IMR-90 (cell line): ENCODE measurements at regions of chr9 and their contacts with region 1.

Region 1: DNA sequence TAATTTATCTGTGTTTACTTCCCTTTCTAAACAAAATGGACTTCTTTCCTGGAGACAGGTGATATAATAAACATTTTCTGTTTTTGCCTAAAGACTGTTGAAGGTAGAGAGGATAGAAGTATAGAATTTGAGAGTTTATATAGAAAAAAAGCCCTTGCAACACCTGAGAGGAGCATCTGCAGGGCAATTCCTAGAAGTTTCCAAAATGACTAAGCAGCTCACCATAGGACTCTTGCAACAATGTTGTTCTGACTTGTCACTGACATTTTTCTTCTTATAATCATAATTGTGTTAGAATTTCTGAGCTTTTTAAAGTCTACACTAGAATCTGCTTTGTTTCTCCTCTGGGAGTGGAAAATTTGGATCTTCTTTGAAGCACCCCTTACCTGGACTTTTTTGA is 216.8 kb downstream of the TUSC1 start:
- DNase-seq: no peak
- ATAC-seq: no peak
- H3K4me3 ChIP-seq: no peak overlapping the region
- H3K27ac ChIP-seq: no peak overlapping the region
- H3K4me1 ChIP-seq: no peaks in the 10 kb centered on the region
- H3K27me3 ChIP-seq: no peaks in the 10 kb centered on the region
- CTCF ChIP-seq: no peak
- POLR2A ChIP-seq: no peak
- RAD21 ChIP-seq: no peak

Region 2: GRCh38 chr9:25412646-25413045 is 48.8 kb before region 1 on chr9:
- CTCF ChIA-PET with region 1: no interaction called
- POLR2A ChIA-PET with region 1: no interaction called
- dilution Hi-C with region 1: no loop called
- in situ Hi-C with region 1: no loop called
- intact Hi-C with region 1: loop called (anchors 10 kb)
- DNase-seq: no peak
- ATAC-seq: no peak
- H3K4me3 ChIP-seq: no peak overlapping the region
- H3K27ac ChIP-seq: no peak overlapping the region
- H3K4me1 ChIP-seq: no peaks in the 10 kb centered on the region
- H3K27me3 ChIP-seq: no peaks in the 10 kb centered on the region
- CTCF ChIP-seq: no peak
- POLR2A ChIP-seq: no peak
- RAD21 ChIP-seq: no peak

Region 3: GRCh38 chr9:25570802-25571201 is 109.4 kb after region 1 on chr9:
- CTCF ChIA-PET with region 1: no interaction called
- POLR2A ChIA-PET with region 1: no interaction called
- dilution Hi-C with region 1: no loop called
- in situ Hi-C with region 1: no loop called
- intact Hi-C with region 1: no loop called
- DNase-seq: no peak
- ATAC-seq: no peak
- H3K4me3 ChIP-seq: no peak overlapping the region
- H3K27ac ChIP-seq: no peak overlapping the region
- H3K4me1 ChIP-seq: no peaks in the 10 kb centered on the region
- H3K27me3 ChIP-seq: no peaks in the 10 kb centered on the region
- CTCF ChIP-seq: no peak
- POLR2A ChIP-seq: no peak
- RAD21 ChIP-seq: no peak

Region 4: GRCh38 chr9:25602400-25603046 is 141.1 kb after region 1 on chr9:
- CTCF ChIA-PET with region 1: no interaction called
- POLR2A ChIA-PET with region 1: no interaction called
- dilution Hi-C with region 1: no loop called
- in situ Hi-C with region 1: no loop called
- intact Hi-C with region 1: no loop called
- DNase-seq: no peak
- ATAC-seq: no peak
- H3K4me3 ChIP-seq: no peak overlapping the region
- H3K27ac ChIP-seq: no peak overlapping the region
- H3K4me1 ChIP-seq: no peaks in the 10 kb centered on the region
- H3K27me3 ChIP-seq: no peaks in the 10 kb centered on the region
- CTCF ChIP-seq: no peak
- POLR2A ChIP-seq: no peak
- RAD21 ChIP-seq: no peak

Region 5: GRCh38 chr9:25629231-25629630 is 167.8 kb after region 1 on chr9:
- CTCF ChIA-PET with region 1: no interaction called
- POLR2A ChIA-PET with region 1: no interaction called
- dilution Hi-C with region 1: no loop called
- in situ Hi-C with region 1: no loop called
- intact Hi-C with region 1: no loop called
- DNase-seq: no peak
- ATAC-seq: no peak
- H3K4me3 ChIP-seq: no peak overlapping the region
- H3K27ac ChIP-seq: no peak overlapping the region
- H3K4me1 ChIP-seq: no peaks in the 10 kb centered on the region
- H3K27me3 ChIP-seq: no peaks in the 10 kb centered on the region
- CTCF ChIP-seq: no peak
- POLR2A ChIP-seq: no peak
- RAD21 ChIP-seq: no peak

Region 6: GRCh38 chr9:26520141-26520540 is 1058.7 kb after region 1 on chr9:
- CTCF ChIA-PET with region 1: no interaction called
- POLR2A ChIA-PET with region 1: no interaction called
- dilution Hi-C with region 1: no loop called
- in situ Hi-C with region 1: no loop called
- intact Hi-C with region 1: no loop called
- DNase-seq: no peak
- ATAC-seq: no peak
- H3K4me3 ChIP-seq: no peak overlapping the region
- H3K27ac ChIP-seq: no peak overlapping the region
- H3K4me1 ChIP-seq: no peaks in the 10 kb centered on the region
- H3K27me3 ChIP-seq: no peaks in the 10 kb centered on the region
- CTCF ChIP-seq: no peak
- POLR2A ChIP-seq: no peak
- RAD21 ChIP-seq: no peak